ENCODE measurements at regions of chr3 and their contacts with region 1.

Region 1: GRCh38 chr3:51799879-51800749 is 21.1 kb upstream of the IQCF6 start:
- DNase-seq: peak; percentile 43
- ATAC-seq: peak; percentile 50
- H3K4me3 Mint-ChIP-seq: no peak overlapping the region
- H3K27ac Mint-ChIP-seq: no peak overlapping the region
- H3K4me1 Mint-ChIP-seq: peaks cover 35% of the 10 kb centered on the region
- H3K27me3 Mint-ChIP-seq: peaks cover 16% of the 10 kb centered on the region
- CTCF ChIP-seq: peak; percentile 84

Region 2: DNA sequence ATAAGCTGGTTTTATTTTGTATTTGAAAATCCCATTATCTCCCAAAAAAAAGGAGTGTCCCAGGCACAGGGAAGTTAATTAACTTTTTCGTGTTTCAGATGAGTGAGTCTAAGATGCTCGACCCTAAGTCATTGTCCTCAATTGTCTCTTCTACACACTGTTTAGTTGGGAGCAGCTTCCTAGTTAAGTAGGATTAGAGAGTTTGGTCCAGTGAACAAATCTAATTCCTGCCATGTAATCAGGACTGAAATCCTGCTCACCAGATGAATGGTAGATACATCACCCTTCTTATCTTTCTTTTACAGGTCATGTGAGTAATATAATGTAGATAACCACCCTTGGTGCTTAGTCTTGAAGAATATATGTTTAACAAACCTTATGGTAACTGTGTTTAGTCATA is 644.0 kb before region 1 on chr3:
- CTCF ChIA-PET with region 1: no interaction called
- POLR2A ChIA-PET with region 1: no interaction called
- intact Hi-C with region 1: no loop called
- DNase-seq: no peak
- ATAC-seq: no peak
- H3K4me3 Mint-ChIP-seq: no peak overlapping the region
- H3K27ac Mint-ChIP-seq: no peak overlapping the region
- H3K4me1 Mint-ChIP-seq: no peaks in the 10 kb centered on the region
- H3K27me3 Mint-ChIP-seq: no peaks in the 10 kb centered on the region
- CTCF ChIP-seq: no peak

Region 3: DNA sequence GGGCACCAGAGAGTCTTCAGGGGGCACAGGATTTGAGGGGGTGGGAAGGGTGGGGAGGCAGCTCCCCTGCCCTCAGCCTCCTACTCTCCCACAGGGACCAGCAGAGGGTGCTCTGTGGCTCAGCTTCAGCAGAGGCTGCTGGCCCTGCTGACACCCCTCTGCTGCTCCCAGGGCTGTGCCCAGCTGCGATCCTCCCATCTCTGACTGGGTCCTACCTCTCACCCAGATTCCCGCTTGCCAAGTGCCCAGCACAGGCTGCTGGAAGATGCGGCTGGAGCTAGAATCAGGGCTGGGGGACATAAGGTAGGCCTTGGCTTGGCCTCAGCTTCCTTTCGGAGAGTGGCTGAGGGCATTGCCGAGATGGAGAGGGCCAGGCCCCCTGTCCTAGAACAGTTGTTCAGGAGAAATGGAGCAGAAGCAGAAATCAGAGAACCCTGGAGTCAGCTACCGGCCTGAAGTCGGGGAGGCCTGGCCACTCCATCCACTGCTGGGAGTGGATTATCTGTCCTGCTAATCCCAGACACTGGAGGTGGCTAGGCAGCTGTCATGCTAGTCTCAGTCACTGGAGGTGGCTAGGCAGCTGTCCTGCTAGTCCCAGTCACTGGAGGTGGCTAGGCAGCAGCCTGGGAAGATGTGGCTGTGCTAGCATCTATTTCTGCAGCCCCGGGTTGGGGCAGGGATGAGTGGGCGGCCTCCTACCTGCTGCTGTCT is 89.3 kb before region 1 on chr3:
- CTCF ChIA-PET with region 1: interaction called, 84 read pairs
- POLR2A ChIA-PET with region 1: no interaction called
- intact Hi-C with region 1: no loop called
- DNase-seq: peak; percentile 42
- ATAC-seq: peak; percentile 53
- H3K4me3 Mint-ChIP-seq: no peak overlapping the region
- H3K27ac Mint-ChIP-seq: no peak overlapping the region
- H3K4me1 Mint-ChIP-seq: peaks cover 10% of the 10 kb centered on the region
- H3K27me3 Mint-ChIP-seq: peaks cover 3% of the 10 kb centered on the region
- CTCF ChIP-seq: no peak

Region 4: GRCh38 chr3:51718547-51719409 is 81.3 kb before region 1 on chr3:
- CTCF ChIA-PET with region 1: interaction called, 84 read pairs
- POLR2A ChIA-PET with region 1: interaction called, 5 read pairs
- intact Hi-C with region 1: loop called (anchors 5 kb)
- DNase-seq: peak; percentile 90
- ATAC-seq: peak; percentile 95
- H3K4me3 Mint-ChIP-seq: no peak overlapping the region
- H3K27ac Mint-ChIP-seq: no peak overlapping the region
- H3K4me1 Mint-ChIP-seq: peaks cover 35% of the 10 kb centered on the region
- H3K27me3 Mint-ChIP-seq: no peaks in the 10 kb centered on the region
- CTCF ChIP-seq: peak; percentile 87

Region 5: GRCh38 chr3:51729042-51729633 is 71.0 kb before region 1 on chr3:
- CTCF ChIA-PET with region 1: interaction called, 41 read pairs
- POLR2A ChIA-PET with region 1: interaction called, 3 read pairs
- intact Hi-C with region 1: loop called (anchors 5 kb)
- DNase-seq: no peak
- ATAC-seq: peak; percentile 57
- H3K4me3 Mint-ChIP-seq: peak overlapping the region; percentile 3
- H3K27ac Mint-ChIP-seq: peak overlapping the region; percentile 84
- H3K4me1 Mint-ChIP-seq: peaks cover 45% of the 10 kb centered on the region
- H3K27me3 Mint-ChIP-seq: peaks cover 1% of the 10 kb centered on the region
- CTCF ChIP-seq: no peak

Region 6: GRCh38 chr3:51813539-51813938 is 13.4 kb after region 1 on chr3:
- CTCF ChIA-PET with region 1: interaction called, 16 read pairs
- POLR2A ChIA-PET with region 1: interaction called, 4 read pairs
- intact Hi-C with region 1: no loop called
- DNase-seq: no peak
- ATAC-seq: no peak
- H3K4me3 Mint-ChIP-seq: no peak overlapping the region
- H3K27ac Mint-ChIP-seq: no peak overlapping the region
- H3K4me1 Mint-ChIP-seq: no peaks in the 10 kb centered on the region
- H3K27me3 Mint-ChIP-seq: peaks cover 7% of the 10 kb centered on the region
- CTCF ChIP-seq: no peak

Region 7: GRCh38 chr3:51819709-51820406 is 19.7 kb after region 1 on chr3:
- CTCF ChIA-PET with region 1: interaction called, 13 read pairs
- POLR2A ChIA-PET with region 1: no interaction called
- intact Hi-C with region 1: no loop called
- DNase-seq: peak; percentile 39
- ATAC-seq: peak; percentile 45
- H3K4me3 Mint-ChIP-seq: no peak overlapping the region
- H3K27ac Mint-ChIP-seq: no peak overlapping the region
- H3K4me1 Mint-ChIP-seq: peaks cover 7% of the 10 kb centered on the region
- H3K27me3 Mint-ChIP-seq: peaks cover 17% of the 10 kb centered on the region
- CTCF ChIP-seq: peak; percentile 50

Region 8: GRCh38 chr3:52197842-52198668 is 397.9 kb after region 1 on chr3 and contains the start of gene ALAS1:
- CTCF ChIA-PET with region 1: no interaction called
- POLR2A ChIA-PET with region 1: no interaction called
- intact Hi-C with region 1: no loop called
- DNase-seq: peak; percentile 95
- ATAC-seq: peak; percentile 97
- H3K4me3 Mint-ChIP-seq: peak within 1 kb of the TSS; percentile 99
- H3K27ac Mint-ChIP-seq: peak within 1 kb of the TSS; percentile 93
- H3K4me1 Mint-ChIP-seq: peaks cover 52% of the 10 kb centered on the region
- H3K27me3 Mint-ChIP-seq: no peaks in the 10 kb centered on the region
- CTCF ChIP-seq: no peak
- total RNA-seq, gene ALAS1: 54.3 to 54.6 TPM

Measured in activated CD8-positive, alpha-beta T cell treated with anti-CD3 and anti-CD28 coated beads for 36 hours (primary cell).